HepG2 (cell line): ENCODE measurements at regions of chr19 and their contacts with region 1.

Region 1: GRCh38 chr19:32287811-32288227 is 57.6 kb upstream of the ZNF507 start:
- DNase-seq: peak; percentile 67
- ATAC-seq: peak; percentile 92
- H3K4me3 ChIP-seq: peak overlapping the region; percentile 11 to 51 (median 28); a peak in 3 of 6 replicates
- H3K27ac ChIP-seq: no peak overlapping the region
- H3K4me1 ChIP-seq: peaks cover 9% of the 10 kb centered on the region; the same call in 1 of the 2 replicates
- H3K27me3 ChIP-seq: no peaks in the 10 kb centered on the region; a peak in 2 of 5 replicates
- CTCF ChIP-seq: peak; percentile 95
- EP300 ChIP-seq: no peak
- POLR2A ChIP-seq: no peak
- RAD21 ChIP-seq: peak; percentile 75

Region 2: DNA sequence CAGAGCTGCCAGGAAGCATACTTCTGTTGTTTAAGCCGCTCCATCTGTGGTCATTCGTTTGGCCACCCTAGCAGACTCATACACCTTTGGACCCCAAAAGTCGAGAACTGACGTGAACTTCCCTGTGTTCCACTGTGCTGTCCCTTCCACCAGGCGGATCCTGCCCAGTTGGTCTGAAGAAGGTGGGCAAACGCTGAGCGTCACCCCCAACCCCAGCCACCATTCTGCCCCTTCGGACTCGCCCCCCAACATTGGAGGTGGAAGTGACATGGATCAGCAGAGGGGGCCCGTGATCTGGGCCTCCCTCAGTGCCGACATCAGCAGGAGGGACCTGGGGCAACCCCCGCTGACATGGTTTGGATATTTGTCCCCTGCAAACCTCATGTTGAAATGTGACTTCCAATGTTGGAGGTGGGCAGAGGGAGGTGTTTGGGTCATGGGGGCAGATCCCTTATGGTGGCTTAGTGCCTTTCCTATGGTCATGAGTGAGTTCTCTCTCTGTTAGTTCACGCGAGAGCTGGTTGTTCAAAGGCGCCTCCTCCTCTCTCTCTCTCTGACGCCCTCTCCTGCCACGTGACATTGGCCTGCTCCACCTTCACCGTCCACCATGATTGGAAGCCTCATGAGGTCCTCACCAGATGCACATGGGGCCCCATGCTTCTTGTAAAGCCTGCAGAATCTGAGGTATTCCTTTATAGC is 36.0 kb before region 1 on chr19:
- CTCF ChIA-PET with region 1: no interaction called
- POLR2A ChIA-PET with region 1: no interaction called
- in situ Hi-C with region 1: no loop called
- intact Hi-C with region 1: no loop called
- DNase-seq: no peak
- ATAC-seq: no peak
- H3K4me3 ChIP-seq: no peak overlapping the region
- H3K27ac ChIP-seq: no peak overlapping the region
- H3K4me1 ChIP-seq: no peaks in the 10 kb centered on the region
- H3K27me3 ChIP-seq: peaks cover 0 to 14% of the 10 kb centered on the region in 2 experiments; a peak in 1 of 5 replicates
- CTCF ChIP-seq: no peak
- EP300 ChIP-seq: no peak
- POLR2A ChIP-seq: no peak
- RAD21 ChIP-seq: no peak

Region 3: DNA sequence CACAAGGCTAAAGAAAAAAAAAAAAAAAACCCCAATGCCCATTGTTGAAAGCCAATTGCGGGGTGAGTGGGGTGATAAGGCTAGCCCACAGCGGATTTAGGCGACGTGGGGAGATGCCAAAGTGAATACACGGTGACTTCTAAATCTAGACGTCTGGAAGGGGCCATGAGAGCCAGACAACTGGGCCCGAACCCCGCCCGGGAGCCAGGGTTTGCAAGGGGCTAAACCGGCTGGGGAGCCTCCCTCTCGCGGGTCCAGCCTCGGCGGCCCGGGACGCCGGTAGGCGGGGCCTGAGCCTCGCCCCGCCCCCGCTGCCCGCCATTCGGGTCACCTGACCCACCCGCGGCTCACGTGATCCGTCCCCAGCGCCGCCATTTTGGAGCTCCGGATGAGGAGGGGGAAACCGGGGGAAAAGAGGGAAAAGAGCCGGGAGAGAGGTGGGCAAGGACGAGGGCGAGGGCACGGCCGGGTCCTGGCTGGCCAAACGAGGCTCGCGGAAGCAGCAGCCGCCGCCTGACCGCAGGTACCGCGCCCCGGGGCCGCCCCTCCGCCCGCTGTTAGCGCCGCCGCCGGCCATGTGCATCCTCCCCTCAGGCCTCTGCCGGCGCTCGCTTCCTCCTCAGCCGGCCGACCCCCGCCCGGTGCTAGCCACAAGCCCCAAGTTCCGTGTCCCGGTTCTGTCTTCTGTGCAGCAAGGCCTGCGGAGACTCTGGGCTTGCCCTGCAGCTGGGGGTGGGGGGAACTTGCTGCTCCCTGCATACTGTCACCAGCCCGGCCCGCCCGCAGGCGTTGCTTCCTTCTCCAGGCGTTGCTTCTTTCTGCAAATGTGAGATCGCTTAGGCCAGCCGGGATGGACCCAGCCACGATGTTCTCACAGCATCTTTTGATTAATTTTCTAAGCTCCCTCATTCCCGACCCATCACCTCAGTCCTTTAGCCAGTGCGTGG is 57.7 kb after region 1 on chr19 and contains the start of gene ZNF507:
- CTCF ChIA-PET with region 1: no interaction called
- POLR2A ChIA-PET with region 1: no interaction called
- in situ Hi-C with region 1: no loop called
- intact Hi-C with region 1: no loop called
- DNase-seq: peak; percentile 59
- ATAC-seq: peak; percentile 82
- H3K4me3 ChIP-seq: peak within 1 kb of the TSS; percentile 84 to 96 (median 94)
- H3K27ac ChIP-seq: peak within 1 kb of the TSS; percentile 76
- H3K4me1 ChIP-seq: peaks cover 53% of the 10 kb centered on the region
- H3K27me3 ChIP-seq: no peaks in the 10 kb centered on the region; a peak in 1 of 5 replicates
- CTCF ChIP-seq: peak; percentile 13; the same call in 1 of the 2 replicates
- EP300 ChIP-seq: no peak
- POLR2A ChIP-seq: peak; percentile 47 to 58; a peak in 3 of 4 replicates
- RAD21 ChIP-seq: no peak; the same call in 1 of the 2 replicates
- total RNA-seq, gene ZNF507: 7.3 and 16.4 TPM in 2 replicates

Region 4: DNA sequence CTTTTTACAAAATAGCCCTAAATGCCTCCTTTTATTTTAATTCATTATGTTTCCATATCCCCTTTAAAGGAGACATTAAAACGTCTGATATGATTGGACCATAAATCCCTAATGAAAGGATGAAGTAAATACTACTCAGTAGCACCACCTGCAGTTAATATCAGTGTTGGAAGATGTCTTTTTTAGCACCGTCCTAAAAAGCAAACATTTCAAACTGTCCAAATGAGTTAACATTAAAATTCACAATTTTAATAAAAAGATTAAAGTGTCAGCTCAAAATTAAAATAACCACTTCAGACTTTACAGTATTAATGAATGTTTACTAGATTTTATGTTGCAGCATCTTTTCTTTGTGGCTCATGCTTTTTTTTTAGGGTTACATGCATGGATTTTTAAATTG is 69.9 kb after region 1 on chr19:
- CTCF ChIA-PET with region 1: no interaction called
- POLR2A ChIA-PET with region 1: no interaction called
- in situ Hi-C with region 1: no loop called
- intact Hi-C with region 1: loop called (anchors 5 kb)
- DNase-seq: no peak
- ATAC-seq: no peak
- H3K4me3 ChIP-seq: no peak overlapping the region
- H3K27ac ChIP-seq: no peak overlapping the region
- H3K4me1 ChIP-seq: peaks cover 33% of the 10 kb centered on the region
- H3K27me3 ChIP-seq: no peaks in the 10 kb centered on the region
- CTCF ChIP-seq: 0 out of 2 replicates have a peak, but pooled peaks have one; percentile 12
- EP300 ChIP-seq: no peak
- POLR2A ChIP-seq: no peak
- RAD21 ChIP-seq: no peak